ENCODE measurements at regions of chr1 and their contacts with region 1.

Region 1: GRCh38 chr1:85276215-85276977 is at the start of gene BCL10:
- DNase-seq: peak; percentile 100
- H3K4me3 ChIP-seq: peak within 1 kb of the TSS; percentile 64 to 98 (median 92)
- H3K27ac ChIP-seq: peak within 1 kb of the TSS; percentile 96
- H3K4me1 ChIP-seq: peaks cover 45% of the 10 kb centered on the region
- H3K27me3 ChIP-seq: no peaks in the 10 kb centered on the region
- CTCF ChIP-seq: no peak
- total RNA-seq, gene BCL10: 27.7 to 61.5 TPM

Region 2: DNA sequence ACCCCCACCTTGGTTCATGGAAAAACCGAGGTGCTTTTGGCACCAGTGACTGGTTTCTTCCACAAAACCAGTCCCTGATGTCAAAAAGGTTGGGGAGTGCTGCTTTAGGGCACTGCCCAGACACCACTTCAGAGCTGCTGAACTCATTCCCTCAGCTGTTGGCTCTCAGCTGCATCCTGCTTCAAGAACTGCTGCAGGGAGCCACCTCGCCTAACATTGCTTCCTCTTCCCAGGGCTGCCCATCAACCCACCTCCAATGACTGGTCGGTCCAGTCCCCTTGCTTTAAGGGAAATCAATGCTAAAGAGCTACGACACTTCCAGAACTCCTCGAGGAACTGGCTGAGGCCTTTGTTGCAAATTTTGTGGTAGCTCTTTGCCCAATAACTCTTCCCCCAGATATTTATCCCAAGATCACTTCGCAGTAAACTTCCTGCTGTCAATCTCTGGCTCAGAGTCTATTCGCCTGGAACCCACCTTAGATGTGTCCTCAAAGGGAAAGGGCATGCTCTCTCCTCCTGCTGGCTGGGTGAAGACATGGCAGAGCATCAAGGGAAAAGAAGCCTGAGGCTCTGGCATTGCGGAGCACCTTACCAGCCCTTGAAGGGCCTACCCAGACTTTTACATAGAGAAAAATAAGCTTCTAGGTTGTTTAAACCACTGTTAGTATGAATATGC is 46.0 kb before region 1 on chr1:
- CTCF ChIA-PET with region 1: no interaction called
- dilution Hi-C with region 1: no loop called
- in situ Hi-C with region 1: no loop called
- intact Hi-C with region 1: no loop called
- DNase-seq: no peak
- H3K4me3 ChIP-seq: no peak overlapping the region
- H3K27ac ChIP-seq: no peak overlapping the region
- H3K4me1 ChIP-seq: peaks cover 8% of the 10 kb centered on the region
- H3K27me3 ChIP-seq: no peaks in the 10 kb centered on the region
- CTCF ChIP-seq: peak; percentile 3 to 32

Region 3: DNA sequence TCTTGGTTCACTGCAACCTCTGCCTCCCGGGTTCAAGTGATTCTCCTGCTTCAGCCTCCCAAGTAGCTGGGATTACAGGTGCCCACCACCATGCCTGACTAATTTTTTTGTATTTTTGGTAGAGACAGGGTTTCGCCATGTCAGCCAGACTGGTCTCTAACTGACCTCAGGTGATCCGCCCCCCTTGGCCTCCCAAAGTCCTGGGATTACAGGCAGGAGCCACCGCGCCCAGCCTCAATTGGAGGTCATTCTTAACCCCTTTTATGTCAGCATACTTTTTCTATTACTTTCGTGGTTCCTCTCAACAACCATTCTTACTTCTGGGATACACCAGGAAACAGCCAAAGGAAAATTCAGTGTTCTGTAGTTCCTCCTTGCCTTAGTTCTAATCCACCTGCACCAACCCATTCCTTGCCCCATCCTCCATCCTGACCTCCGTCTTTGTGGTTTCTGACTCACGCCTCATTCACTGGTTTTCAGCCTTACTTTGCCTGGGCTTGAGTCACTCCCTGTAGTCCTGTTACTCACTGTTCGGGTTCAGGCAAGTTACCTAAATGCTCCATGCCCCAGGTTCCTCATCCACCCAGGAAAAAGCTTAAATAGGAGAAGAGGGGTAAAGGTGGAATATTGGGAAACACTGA is 12.9 kb after region 1 on chr1:
- CTCF ChIA-PET with region 1: no interaction called
- dilution Hi-C with region 1: no loop called
- in situ Hi-C with region 1: no loop called
- intact Hi-C with region 1: loop called (anchors 1 kb)
- DNase-seq: peak; percentile 99
- H3K4me3 ChIP-seq: no peak overlapping the region
- H3K27ac ChIP-seq: peak overlapping the region; percentile 65
- H3K4me1 ChIP-seq: peaks cover 52% of the 10 kb centered on the region
- H3K27me3 ChIP-seq: no peaks in the 10 kb centered on the region
- CTCF ChIP-seq: no peak

Region 4: GRCh38 chr1:85297855-85298629 is 21.6 kb after region 1 on chr1:
- CTCF ChIA-PET with region 1: interaction called, 3 read pairs
- dilution Hi-C with region 1: no loop called
- in situ Hi-C with region 1: no loop called
- intact Hi-C with region 1: loop called (anchors 1 kb)
- DNase-seq: peak; percentile 96
- H3K4me3 ChIP-seq: peak overlapping the region in 2 of 3 experiments; percentile 19 to 21
- H3K27ac ChIP-seq: peak overlapping the region; percentile 92
- H3K4me1 ChIP-seq: peaks cover 53% of the 10 kb centered on the region
- H3K27me3 ChIP-seq: no peaks in the 10 kb centered on the region
- CTCF ChIP-seq: no peak

Region 5: GRCh38 chr1:85933961-85934360 is 657.6 kb after region 1 on chr1:
- CTCF ChIA-PET with region 1: no interaction called
- dilution Hi-C with region 1: no loop called
- in situ Hi-C with region 1: no loop called
- intact Hi-C with region 1: no loop called
- DNase-seq: no peak
- H3K4me3 ChIP-seq: no peak overlapping the region
- H3K27ac ChIP-seq: no peak overlapping the region
- H3K4me1 ChIP-seq: no peaks in the 10 kb centered on the region
- H3K27me3 ChIP-seq: no peaks in the 10 kb centered on the region
- CTCF ChIP-seq: no peak